ENCODE measurements at regions of chr3 and their contacts with region 1.

Region 1: DNA sequence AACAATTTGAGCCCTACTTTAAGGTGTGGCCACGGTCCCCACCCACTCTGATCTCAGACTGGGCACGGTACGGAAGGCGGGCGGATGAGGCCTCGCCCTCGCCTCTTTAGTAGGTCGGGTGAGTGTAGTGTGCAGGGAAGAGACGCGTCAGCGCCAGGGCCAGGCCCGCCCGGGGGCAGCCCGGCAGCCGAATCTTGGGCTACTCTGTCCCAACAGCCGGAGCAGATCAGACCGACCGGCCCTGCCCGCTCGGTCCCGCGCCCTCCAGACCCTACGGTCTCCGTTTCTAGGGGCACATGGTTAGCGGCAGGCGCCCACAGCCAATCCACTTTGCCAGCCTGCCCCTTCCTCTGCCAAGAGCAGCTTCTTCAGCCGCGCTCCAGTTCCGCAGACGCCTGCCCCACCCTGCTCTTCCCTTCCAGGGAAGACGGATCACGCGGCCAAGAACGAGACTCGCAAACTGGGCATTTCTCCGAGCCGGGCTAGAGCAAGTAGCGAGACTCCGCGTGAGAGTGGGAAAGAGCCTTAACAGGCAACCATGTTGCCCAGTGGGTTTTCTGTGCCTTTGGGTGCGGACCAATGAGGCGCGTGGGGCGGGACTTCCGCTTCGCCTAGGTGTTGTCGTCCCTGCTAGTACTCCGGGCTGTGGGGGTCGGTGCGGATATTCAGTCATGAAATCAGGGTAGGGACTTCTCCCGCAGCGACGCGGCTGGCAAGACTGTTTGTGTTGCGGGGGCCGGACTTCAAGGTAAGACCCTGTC is at the start of gene RNF13:
- DNase-seq: peak; percentile 95
- H3K4me3 Mint-ChIP-seq: peak within 1 kb of the TSS; percentile 90
- H3K27ac Mint-ChIP-seq: peak within 1 kb of the TSS; percentile 98
- H3K4me1 Mint-ChIP-seq: peaks cover 41% of the 10 kb centered on the region
- H3K27me3 Mint-ChIP-seq: peaks cover 3% of the 10 kb centered on the region
- total RNA-seq, gene RNF13: 29.4 to 31.5 TPM

Region 2: GRCh38 chr3:149291178-149291577 is 521.6 kb before region 1 on chr3:
- CTCF ChIA-PET with region 1: no interaction called
- POLR2A ChIA-PET with region 1: no interaction called
- intact Hi-C with region 1: loop called (anchors 5 kb)
- DNase-seq: no peak
- H3K4me3 Mint-ChIP-seq: no peak overlapping the region
- H3K27ac Mint-ChIP-seq: no peak overlapping the region
- H3K4me1 Mint-ChIP-seq: no peaks in the 10 kb centered on the region
- H3K27me3 Mint-ChIP-seq: no peaks in the 10 kb centered on the region

Region 3: GRCh38 chr3:149566292-149566975 is 246.4 kb before region 1 on chr3:
- CTCF ChIA-PET with region 1: interaction called, 29 read pairs
- POLR2A ChIA-PET with region 1: no interaction called
- intact Hi-C with region 1: loop called (anchors 2 kb)
- DNase-seq: no peak
- H3K4me3 Mint-ChIP-seq: no peak overlapping the region
- H3K27ac Mint-ChIP-seq: no peak overlapping the region
- H3K4me1 Mint-ChIP-seq: no peaks in the 10 kb centered on the region
- H3K27me3 Mint-ChIP-seq: peaks cover 4% of the 10 kb centered on the region

Region 4: GRCh38 chr3:149752051-149752787 is 60.6 kb before region 1 on chr3 and contains the start of gene COMMD2:
- CTCF ChIA-PET with region 1: interaction called, 16 read pairs
- POLR2A ChIA-PET with region 1: interaction called, 4 read pairs
- intact Hi-C with region 1: loop called (anchors 1 kb)
- DNase-seq: peak; percentile 89
- H3K4me3 Mint-ChIP-seq: peak within 1 kb of the TSS; percentile 90
- H3K27ac Mint-ChIP-seq: peak within 1 kb of the TSS; percentile 87
- H3K4me1 Mint-ChIP-seq: peaks cover 22% of the 10 kb centered on the region
- H3K27me3 Mint-ChIP-seq: no peaks in the 10 kb centered on the region
- total RNA-seq, gene COMMD2: 28.4 to 34.4 TPM

Region 5: DNA sequence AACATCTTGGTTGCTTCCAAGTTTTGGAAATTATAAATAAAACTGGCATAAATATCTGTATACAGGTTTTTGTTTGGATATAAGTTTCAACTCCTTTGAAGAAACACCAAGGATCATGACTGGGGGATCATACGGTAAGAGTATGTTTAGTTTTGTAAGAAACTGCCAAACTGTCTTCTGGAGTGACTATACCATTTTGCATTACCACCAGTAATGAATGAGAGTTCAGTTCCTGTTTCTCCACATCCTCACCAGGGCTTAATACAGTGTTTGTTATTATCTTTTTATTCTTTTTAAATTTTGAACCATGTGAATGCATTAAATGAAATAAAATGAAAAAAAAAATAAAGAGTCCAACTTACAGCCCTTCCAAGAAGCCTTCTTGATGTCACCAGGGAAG is 16.8 kb before region 1 on chr3:
- CTCF ChIA-PET with region 1: interaction called, 11 read pairs
- POLR2A ChIA-PET with region 1: no interaction called
- intact Hi-C with region 1: no loop called
- DNase-seq: no peak
- H3K4me3 Mint-ChIP-seq: no peak overlapping the region
- H3K27ac Mint-ChIP-seq: no peak overlapping the region
- H3K4me1 Mint-ChIP-seq: no peaks in the 10 kb centered on the region
- H3K27me3 Mint-ChIP-seq: peaks cover 6% of the 10 kb centered on the region